ENCODE measurements at regions of chr20 and their contacts with region 1.

Region 1: DNA sequence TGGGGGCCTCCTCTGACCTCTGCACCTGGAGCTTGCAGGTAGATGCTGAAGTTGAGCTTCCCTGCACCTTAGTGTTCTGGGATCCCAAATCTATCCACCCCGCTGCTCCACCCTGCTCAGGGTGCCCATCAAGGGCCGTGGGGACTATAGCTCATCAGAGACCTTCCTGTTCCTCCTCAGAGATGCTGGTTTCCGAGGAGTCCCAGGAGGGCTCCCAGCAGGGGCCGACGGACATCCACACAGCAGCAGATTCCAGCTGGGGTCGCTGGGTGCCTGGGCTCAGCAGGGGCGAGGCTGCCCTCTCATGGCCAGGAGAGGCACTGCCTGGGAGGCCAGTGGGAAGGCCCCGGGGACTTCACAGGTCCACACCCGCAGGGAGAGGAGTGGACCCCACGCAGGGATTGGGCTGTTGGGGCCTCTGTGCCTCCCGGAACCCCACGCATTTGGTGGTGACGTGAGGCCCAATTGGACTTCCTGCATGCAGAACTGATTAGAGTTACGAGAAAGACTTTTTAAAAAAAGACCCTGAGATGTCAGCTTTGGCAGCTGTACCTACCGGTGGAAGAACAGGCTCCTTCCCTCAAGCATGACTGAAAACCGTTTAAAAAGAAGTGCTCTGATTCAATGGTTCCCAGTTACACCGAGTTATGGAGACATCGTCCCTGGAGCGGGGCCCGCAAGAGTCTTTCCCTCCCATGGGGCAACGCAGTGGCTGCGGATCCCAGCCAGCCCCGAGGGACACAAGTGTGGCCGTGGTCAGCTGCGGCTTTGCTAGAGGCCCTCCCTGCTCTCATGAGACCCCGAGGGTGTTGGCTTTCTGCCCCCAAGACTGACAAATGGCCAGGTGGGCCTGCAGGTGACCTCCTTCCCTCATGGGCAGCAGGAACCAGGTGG is 25.3 kb upstream of the SLCO4A1 start:
- DNase-seq: peak; percentile 75
- H3K4me3 ChIP-seq: no peak overlapping the region
- H3K27ac ChIP-seq: no peak overlapping the region
- H3K4me1 ChIP-seq: peaks cover 20% of the 10 kb centered on the region
- H3K27me3 ChIP-seq: no peaks in the 10 kb centered on the region
- CTCF ChIP-seq: peak; percentile 96 to 99
- POLR2A ChIP-seq: no peak

Region 2: GRCh38 chr20:62407221-62407992 is 209.6 kb before region 1 on chr20 and contains the start of gene CABLES2:
- CTCF ChIA-PET with region 1: interaction called, 32 read pairs
- POLR2A ChIA-PET with region 1: no interaction called
- dilution Hi-C with region 1: no loop called
- intact Hi-C with region 1: loop called (anchors 5 kb)
- DNase-seq: peak; percentile 89
- H3K4me3 ChIP-seq: peak within 1 kb of the TSS in 2 of 3 experiments; percentile 17 to 68
- H3K27ac ChIP-seq: no peak within 1 kb of the TSS
- H3K4me1 ChIP-seq: peaks cover 11% of the 10 kb centered on the region
- H3K27me3 ChIP-seq: no peaks in the 10 kb centered on the region
- CTCF ChIP-seq: no peak
- POLR2A ChIP-seq: no peak
- total RNA-seq, gene CABLES2: 9.9 TPM in 2 replicates

Region 3: GRCh38 chr20:62550087-62550632 is 66.8 kb before region 1 on chr20:
- CTCF ChIA-PET with region 1: interaction called, 11 read pairs
- POLR2A ChIA-PET with region 1: no interaction called
- dilution Hi-C with region 1: no loop called
- intact Hi-C with region 1: no loop called
- DNase-seq: no peak
- H3K4me3 ChIP-seq: no peak overlapping the region
- H3K27ac ChIP-seq: no peak overlapping the region
- H3K4me1 ChIP-seq: no peaks in the 10 kb centered on the region
- H3K27me3 ChIP-seq: peaks cover 16 to 30% of the 10 kb centered on the region in 2 experiments
- CTCF ChIP-seq: no peak
- POLR2A ChIP-seq: no peak

Region 4: GRCh38 chr20:62583420-62583920 is 33.5 kb before region 1 on chr20:
- CTCF ChIA-PET with region 1: interaction called, 25 read pairs
- POLR2A ChIA-PET with region 1: no interaction called
- dilution Hi-C with region 1: no loop called
- intact Hi-C with region 1: no loop called
- DNase-seq: no peak
- H3K4me3 ChIP-seq: no peak overlapping the region
- H3K27ac ChIP-seq: no peak overlapping the region
- H3K4me1 ChIP-seq: no peaks in the 10 kb centered on the region
- H3K27me3 ChIP-seq: peaks cover 4 to 12% of the 10 kb centered on the region in 2 experiments
- CTCF ChIP-seq: no peak
- POLR2A ChIP-seq: no peak

Region 5: DNA sequence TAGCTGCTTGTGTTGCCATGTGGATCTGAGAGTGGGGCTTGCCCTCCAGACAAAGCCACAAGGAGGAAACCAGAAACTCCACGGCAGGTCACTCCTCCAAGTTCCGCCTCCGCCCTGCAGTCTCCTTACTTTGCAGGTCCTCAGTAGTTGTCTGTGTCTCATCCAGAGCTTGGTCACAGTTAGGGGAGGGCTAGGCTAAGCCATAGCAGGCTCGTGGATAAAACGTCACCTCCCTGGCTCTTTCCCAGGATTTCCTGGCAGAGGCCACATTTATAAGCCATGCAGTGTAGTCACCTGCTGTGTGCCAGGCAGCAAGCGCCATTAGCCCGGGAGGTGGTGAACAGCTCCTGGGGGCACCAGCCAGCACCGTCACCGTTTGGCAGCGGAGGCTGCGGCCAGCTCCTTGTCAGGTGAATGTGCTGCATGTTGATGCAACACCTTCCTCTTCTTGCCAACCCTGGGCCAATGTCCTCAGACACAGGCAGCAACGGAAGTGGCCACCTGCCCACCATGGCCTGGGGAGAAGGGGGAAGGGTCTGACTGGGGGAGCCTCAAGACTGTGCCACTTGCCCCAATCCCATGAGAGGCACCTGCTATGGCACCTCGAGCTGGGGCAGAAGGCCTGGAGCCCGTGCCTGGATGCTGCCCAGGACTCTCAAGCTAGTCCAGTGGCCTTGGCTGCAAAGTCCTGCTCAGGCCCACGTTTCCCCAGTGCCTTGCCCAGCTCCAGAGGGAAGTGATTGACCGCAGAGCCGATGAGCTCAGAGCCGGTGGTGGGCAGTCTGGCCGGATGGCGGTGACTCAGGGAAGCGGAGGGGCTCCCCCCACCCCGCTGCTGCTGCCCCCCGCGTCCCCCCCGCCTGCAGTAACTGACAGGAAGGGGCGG is 13.7 kb before region 1 on chr20:
- CTCF ChIA-PET with region 1: interaction called, 25 read pairs
- POLR2A ChIA-PET with region 1: no interaction called
- dilution Hi-C with region 1: no loop called
- intact Hi-C with region 1: no loop called
- DNase-seq: peak; percentile 86
- H3K4me3 ChIP-seq: no peak overlapping the region
- H3K27ac ChIP-seq: peak overlapping the region; percentile 78
- H3K4me1 ChIP-seq: peaks cover 16% of the 10 kb centered on the region
- H3K27me3 ChIP-seq: no peaks in the 10 kb centered on the region
- CTCF ChIP-seq: no peak
- POLR2A ChIP-seq: no peak